ENCODE measurements at regions of chr2 and their contacts with region 1.

Region 1: GRCh38 chr2:136086253-136087016 is 31.5 kb downstream of the CXCR4 start:
- DNase-seq: no peak
- ATAC-seq: no peak
- H3K4me3 Mint-ChIP-seq: no peak overlapping the region
- H3K27ac Mint-ChIP-seq: no peak overlapping the region
- H3K4me1 Mint-ChIP-seq: peaks cover 7% of the 10 kb centered on the region
- H3K27me3 Mint-ChIP-seq: no peaks in the 10 kb centered on the region
- CTCF ChIP-seq: no peak

Region 2: DNA sequence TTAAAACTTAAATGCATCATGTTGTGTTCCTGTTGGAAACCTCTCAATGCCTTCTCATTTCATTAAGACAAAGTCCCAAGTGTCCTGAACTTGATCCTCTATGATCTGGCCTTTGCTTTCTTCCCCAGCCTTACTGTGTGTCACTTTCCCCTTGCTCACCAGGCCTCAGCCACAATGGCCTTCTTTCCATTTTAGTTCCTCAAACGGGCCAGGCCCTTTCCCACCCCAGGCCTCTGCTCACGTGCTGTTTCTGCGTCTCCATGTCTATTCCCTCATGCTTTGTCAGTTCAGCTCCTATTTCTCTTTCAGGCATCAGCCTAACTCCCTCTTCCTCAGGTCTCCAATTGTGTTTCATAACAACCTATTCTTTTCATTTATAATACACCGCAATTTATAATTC is 12.0 kb after region 1 on chr2:
- CTCF ChIA-PET with region 1: no interaction called
- POLR2A ChIA-PET with region 1: no interaction called
- intact Hi-C with region 1: no loop called
- DNase-seq: no peak
- ATAC-seq: no peak
- H3K4me3 Mint-ChIP-seq: no peak overlapping the region
- H3K27ac Mint-ChIP-seq: no peak overlapping the region
- H3K4me1 Mint-ChIP-seq: no peaks in the 10 kb centered on the region
- H3K27me3 Mint-ChIP-seq: no peaks in the 10 kb centered on the region
- CTCF ChIP-seq: no peak

Region 3: GRCh38 chr2:136246086-136246669 is 159.7 kb after region 1 on chr2:
- CTCF ChIA-PET with region 1: no interaction called
- POLR2A ChIA-PET with region 1: interaction called, 11 read pairs
- intact Hi-C with region 1: no loop called
- DNase-seq: no peak
- ATAC-seq: peak; percentile 86
- H3K4me3 Mint-ChIP-seq: peak overlapping the region; percentile 35
- H3K27ac Mint-ChIP-seq: peak overlapping the region; percentile 76
- H3K4me1 Mint-ChIP-seq: peaks cover 65% of the 10 kb centered on the region
- H3K27me3 Mint-ChIP-seq: no peaks in the 10 kb centered on the region
- CTCF ChIP-seq: no peak

Measured in activated B cell treated with CpG ODN at 0.5 μM for 24 hours (primary cell).